ENCODE measurements at regions of chr18 and their contacts with region 1.

Region 1: DNA sequence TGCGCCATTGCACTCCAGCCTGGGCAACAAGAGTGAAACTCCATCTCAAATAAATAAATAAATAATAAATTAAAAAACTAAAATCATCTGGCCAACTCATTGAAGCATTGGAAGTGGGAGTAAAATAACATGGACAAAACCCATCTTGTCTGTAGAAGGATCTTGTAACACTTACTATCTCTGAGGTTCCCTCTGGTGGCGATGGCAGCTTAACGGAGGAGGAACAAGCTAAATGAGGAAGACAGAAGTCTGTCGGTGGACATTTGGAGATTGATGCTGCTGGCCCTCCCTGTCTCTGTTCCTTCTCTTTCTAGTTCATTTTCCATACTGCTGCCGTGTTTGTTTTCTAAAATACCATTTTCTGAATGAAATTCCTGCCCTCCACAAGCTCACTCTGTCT is 43.4 kb downstream of the ZCCHC2 start:
- DNase-seq: peak in 2 of 9 donors; percentile 3 to 11
- ATAC-seq: peak; percentile 52
- H3K4me3 ChIP-seq: no peak overlapping the region
- H3K4me3 Mint-ChIP-seq: no peak overlapping the region
- H3K27ac ChIP-seq: no peak overlapping the region
- H3K27ac Mint-ChIP-seq: peak overlapping the region in 3 of 9 donors; percentile 13 to 63 (median 51)
- H3K4me1 ChIP-seq: no peaks in the 10 kb centered on the region
- H3K4me1 Mint-ChIP-seq: peaks cover 0 to 8% (median 3%) of the 10 kb centered on the region in 7 donors
- H3K27me3 ChIP-seq: no peaks in the 10 kb centered on the region
- H3K27me3 Mint-ChIP-seq: no peaks in the 10 kb centered on the region

Region 2: GRCh38 chr18:62537946-62538345 is 28.3 kb before region 1 on chr18:
- CTCF ChIA-PET with region 1: no interaction called
- POLR2A ChIA-PET with region 1: no interaction called
- intact Hi-C with region 1: no loop called
- DNase-seq: no peak
- ATAC-seq: no peak
- H3K4me3 ChIP-seq: no peak overlapping the region
- H3K4me3 Mint-ChIP-seq: no peak overlapping the region
- H3K27ac ChIP-seq: no peak overlapping the region
- H3K27ac Mint-ChIP-seq: peak overlapping the region in 1 of 9 donors; percentile 43
- H3K4me1 ChIP-seq: peaks cover 0 to 20% of the 10 kb centered on the region in 2 donors
- H3K4me1 Mint-ChIP-seq: peaks cover 28 to 75% (median 64%) of the 10 kb centered on the region in 7 donors
- H3K27me3 ChIP-seq: no peaks in the 10 kb centered on the region
- H3K27me3 Mint-ChIP-seq: no peaks in the 10 kb centered on the region

Region 3: DNA sequence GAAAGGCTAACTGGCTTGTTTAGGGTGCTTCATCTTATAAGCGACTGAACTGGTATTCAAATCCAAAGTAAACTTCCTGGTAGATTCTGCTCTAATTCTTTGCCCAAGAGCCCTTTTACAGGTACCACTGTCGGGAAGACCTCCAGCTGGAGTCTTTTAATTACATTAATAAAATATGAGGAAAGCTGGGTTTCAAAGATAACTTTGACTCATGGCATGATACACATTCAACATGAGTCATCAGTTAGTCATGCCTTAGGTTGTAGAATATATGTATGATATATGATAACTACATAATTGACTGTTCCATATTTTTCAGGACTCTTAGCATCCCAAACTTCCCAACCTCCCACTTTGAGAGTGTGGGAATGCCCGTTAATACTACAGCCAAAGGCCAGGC is 11.1 kb before region 1 on chr18:
- CTCF ChIA-PET with region 1: no interaction called
- POLR2A ChIA-PET with region 1: interaction called, 3 read pairs
- intact Hi-C with region 1: loop called in 1 of 2 experiments (anchors 2 kb)
- DNase-seq: no peak
- ATAC-seq: no peak
- H3K4me3 ChIP-seq: no peak overlapping the region
- H3K4me3 Mint-ChIP-seq: no peak overlapping the region
- H3K27ac ChIP-seq: no peak overlapping the region
- H3K27ac Mint-ChIP-seq: no peak overlapping the region
- H3K4me1 ChIP-seq: no peaks in the 10 kb centered on the region
- H3K4me1 Mint-ChIP-seq: peaks cover 11 to 36% (median 22%) of the 10 kb centered on the region in 7 donors
- H3K27me3 ChIP-seq: no peaks in the 10 kb centered on the region
- H3K27me3 Mint-ChIP-seq: no peaks in the 10 kb centered on the region

Measured in naive thymus-derived CD4-positive, alpha-beta T cell (primary cell).